H1 (cell line): ENCODE measurements at regions of chr4 and their contacts with region 1.

Region 1: DNA sequence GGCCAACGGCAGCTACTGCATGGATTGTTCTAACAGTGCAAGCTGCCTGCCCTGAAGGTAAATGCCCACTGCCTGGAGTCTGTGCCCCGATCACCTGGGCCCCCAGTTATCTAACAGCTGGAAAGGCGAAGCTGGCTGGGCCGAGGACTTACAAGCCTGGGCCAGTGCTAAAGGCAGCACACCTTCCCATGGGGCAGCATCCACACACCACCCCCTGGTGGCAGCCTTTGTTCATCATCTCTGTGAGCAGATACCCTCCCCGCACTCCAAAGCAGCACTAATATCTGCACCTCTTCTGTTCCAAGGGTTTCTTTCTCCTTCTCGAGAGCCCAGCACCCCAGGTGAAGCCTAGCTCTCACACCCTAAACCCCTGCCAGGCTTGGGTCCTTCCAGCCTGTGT is 7.6 kb downstream of the SLC2A9 start:
- DNase-seq: peak; percentile 47 to 85
- H3K4me3 ChIP-seq: no peak overlapping the region
- H3K27ac ChIP-seq: no peak overlapping the region
- H3K4me1 ChIP-seq: peaks cover 0 to 4% (median 0%) of the 10 kb centered on the region in 4 experiments; a peak in 1 of 7 replicates
- H3K27me3 ChIP-seq: no peaks in the 10 kb centered on the region; a peak in 1 of 7 replicates
- CTCF ChIP-seq: peak in 2 of 3 experiments; percentile 78 to 82; a peak in 3 of 4 replicates
- EP300 ChIP-seq: no peak
- POLR2A ChIP-seq: no peak
- RAD21 ChIP-seq: peak; percentile 78 to 82

Region 2: DNA sequence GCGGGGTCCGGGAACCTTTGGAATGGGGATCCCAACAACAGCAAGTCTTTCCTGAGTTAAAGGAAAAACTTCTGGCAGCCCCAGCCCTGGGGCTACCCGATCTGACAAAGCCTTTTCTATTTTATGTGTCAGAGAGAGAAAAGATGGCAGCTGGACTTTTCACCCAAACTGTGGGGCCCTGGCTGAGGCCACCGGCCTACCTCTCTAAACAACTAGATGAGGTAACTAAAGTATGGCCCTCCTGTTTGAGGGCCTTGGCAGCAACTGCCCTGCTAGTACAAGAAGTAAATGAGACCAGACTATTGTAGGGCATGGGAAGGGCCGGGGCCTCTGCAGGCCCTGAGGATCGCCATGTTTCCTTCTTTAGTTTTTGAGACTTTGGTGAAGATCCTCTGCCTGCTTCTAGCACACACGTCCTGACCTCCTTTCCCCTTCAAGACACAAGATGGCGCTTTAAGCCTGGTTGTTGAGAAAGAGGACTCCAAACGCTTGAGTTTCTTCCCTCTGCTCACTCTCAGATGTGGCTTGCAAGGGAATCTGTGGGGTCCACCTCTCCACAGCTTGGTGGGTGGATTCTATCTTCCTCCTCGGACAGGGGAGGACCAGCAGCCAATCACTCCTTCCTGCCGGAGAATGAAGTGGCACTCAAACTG is 250.8 kb before region 1 on chr4:
- CTCF ChIA-PET with region 1: interaction called, 211 read pairs
- POLR2A ChIA-PET with region 1: interaction called, 5 read pairs
- DNase-seq: peak; percentile 29 to 67
- H3K4me3 ChIP-seq: no peak overlapping the region
- H3K27ac ChIP-seq: no peak overlapping the region
- H3K4me1 ChIP-seq: no peaks in the 10 kb centered on the region
- H3K27me3 ChIP-seq: no peaks in the 10 kb centered on the region
- CTCF ChIP-seq: peak; percentile 45 to 95 (median 81)
- EP300 ChIP-seq: no peak
- POLR2A ChIP-seq: no peak
- RAD21 ChIP-seq: peak; percentile 97

Region 3: GRCh38 chr4:9893329-9894108 is 120.2 kb before region 1 on chr4:
- CTCF ChIA-PET with region 1: interaction called, 57 read pairs
- POLR2A ChIA-PET with region 1: no interaction called
- DNase-seq: no peak
- H3K4me3 ChIP-seq: no peak overlapping the region
- H3K27ac ChIP-seq: no peak overlapping the region
- H3K4me1 ChIP-seq: peaks cover 0 to 3% (median 0%) of the 10 kb centered on the region in 4 experiments; a peak in 2 of 7 replicates
- H3K27me3 ChIP-seq: no peaks in the 10 kb centered on the region; a peak in 1 of 7 replicates
- CTCF ChIP-seq: peak in 1 of 3 experiments; percentile 1; a peak in 1 of 4 replicates
- EP300 ChIP-seq: no peak
- POLR2A ChIP-seq: no peak
- RAD21 ChIP-seq: no peak; a peak in 1 of 4 replicates

Region 4: GRCh38 chr4:9919047-9919446 is 94.7 kb before region 1 on chr4:
- CTCF ChIA-PET with region 1: interaction called, 64 read pairs
- POLR2A ChIA-PET with region 1: no interaction called
- DNase-seq: peak in 1 of 2 experiments; percentile 50
- H3K4me3 ChIP-seq: no peak overlapping the region
- H3K27ac ChIP-seq: no peak overlapping the region
- H3K4me1 ChIP-seq: peaks cover 0 to 8% (median 4%) of the 10 kb centered on the region in 4 experiments; a peak in 3 of 7 replicates
- H3K27me3 ChIP-seq: no peaks in the 10 kb centered on the region
- CTCF ChIP-seq: peak; percentile 38 to 61 (median 44)
- EP300 ChIP-seq: no peak
- POLR2A ChIP-seq: no peak
- RAD21 ChIP-seq: peak; percentile 48 to 60

Region 5: DNA sequence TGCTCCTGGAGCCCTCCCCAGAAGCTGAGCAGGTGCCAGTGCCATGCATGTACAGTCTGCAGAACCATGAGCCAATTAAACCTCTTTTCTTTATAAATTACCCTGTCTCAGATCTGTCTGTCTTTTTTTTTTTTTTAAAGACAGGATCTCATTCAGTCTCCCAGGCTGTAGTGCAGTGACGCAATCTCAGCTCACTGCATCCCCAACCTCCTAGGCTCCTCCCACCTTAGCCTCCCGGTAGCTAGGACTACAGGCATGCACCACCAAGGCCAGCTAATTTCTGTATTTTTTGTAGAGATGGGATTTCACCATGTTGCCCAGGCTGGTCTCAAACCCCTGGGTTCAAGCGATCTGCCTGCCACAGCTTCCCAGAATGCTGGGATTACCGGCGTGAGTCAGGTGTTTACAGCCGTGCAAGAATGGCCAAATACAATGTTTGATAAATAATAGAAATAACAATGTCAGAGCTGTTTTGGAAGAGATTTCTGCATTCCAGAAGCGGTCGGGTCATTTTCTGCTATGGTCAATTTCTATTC is 61.2 kb before region 1 on chr4:
- CTCF ChIA-PET with region 1: interaction called, 13 read pairs
- POLR2A ChIA-PET with region 1: no interaction called
- DNase-seq: no peak
- H3K4me3 ChIP-seq: no peak overlapping the region
- H3K27ac ChIP-seq: no peak overlapping the region
- H3K4me1 ChIP-seq: peaks cover 0 to 4% (median 0%) of the 10 kb centered on the region in 4 experiments; a peak in 1 of 7 replicates
- H3K27me3 ChIP-seq: no peaks in the 10 kb centered on the region
- CTCF ChIP-seq: no peak
- EP300 ChIP-seq: no peak
- POLR2A ChIP-seq: no peak
- RAD21 ChIP-seq: no peak

Region 6: DNA sequence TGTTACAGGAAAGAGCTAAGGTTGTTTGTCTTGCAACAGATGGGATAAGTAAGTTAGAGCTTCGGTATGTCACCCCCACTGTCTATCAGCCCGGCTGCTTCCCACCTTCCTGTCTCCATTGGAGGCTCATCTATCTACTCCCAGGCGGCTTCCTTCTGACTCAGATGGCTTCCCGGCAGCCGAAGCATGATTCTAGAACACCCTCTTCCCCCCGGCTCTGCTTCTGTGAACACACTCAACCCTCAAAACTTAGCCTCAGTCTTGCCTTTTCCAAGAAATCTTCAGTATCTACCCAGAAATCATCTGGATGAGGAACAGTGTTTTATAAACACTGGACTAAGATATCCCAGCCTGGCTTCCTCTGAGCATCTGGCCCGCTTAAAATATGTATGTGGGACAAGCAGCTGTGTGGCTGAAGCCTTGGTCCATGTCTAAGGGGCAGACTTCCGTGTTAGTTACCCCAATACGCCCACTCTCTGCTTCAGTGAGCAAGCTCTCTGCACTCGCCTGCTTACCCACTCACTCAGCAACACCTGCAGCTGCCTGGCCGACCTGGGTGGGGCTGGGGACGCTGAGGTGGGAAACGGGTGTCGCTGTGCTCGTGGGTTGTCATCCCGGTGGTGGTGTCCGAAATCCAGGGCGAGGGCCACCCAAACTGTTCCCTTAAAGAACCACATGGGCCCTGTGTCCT is 19.6 kb after region 1 on chr4:
- CTCF ChIA-PET with region 1: interaction called, 29 read pairs
- POLR2A ChIA-PET with region 1: no interaction called
- DNase-seq: no peak
- H3K4me3 ChIP-seq: no peak overlapping the region
- H3K27ac ChIP-seq: no peak overlapping the region
- H3K4me1 ChIP-seq: peaks cover 0 to 2% (median 0%) of the 10 kb centered on the region in 4 experiments; a peak in 1 of 7 replicates
- H3K27me3 ChIP-seq: no peaks in the 10 kb centered on the region; a peak in 1 of 7 replicates
- CTCF ChIP-seq: no peak
- EP300 ChIP-seq: no peak
- POLR2A ChIP-seq: no peak
- RAD21 ChIP-seq: no peak